Naive thymus-derived CD4-positive, alpha-beta T cell (primary cell): ENCODE measurements at regions of chr17 and their contacts with region 1.

Region 1: DNA sequence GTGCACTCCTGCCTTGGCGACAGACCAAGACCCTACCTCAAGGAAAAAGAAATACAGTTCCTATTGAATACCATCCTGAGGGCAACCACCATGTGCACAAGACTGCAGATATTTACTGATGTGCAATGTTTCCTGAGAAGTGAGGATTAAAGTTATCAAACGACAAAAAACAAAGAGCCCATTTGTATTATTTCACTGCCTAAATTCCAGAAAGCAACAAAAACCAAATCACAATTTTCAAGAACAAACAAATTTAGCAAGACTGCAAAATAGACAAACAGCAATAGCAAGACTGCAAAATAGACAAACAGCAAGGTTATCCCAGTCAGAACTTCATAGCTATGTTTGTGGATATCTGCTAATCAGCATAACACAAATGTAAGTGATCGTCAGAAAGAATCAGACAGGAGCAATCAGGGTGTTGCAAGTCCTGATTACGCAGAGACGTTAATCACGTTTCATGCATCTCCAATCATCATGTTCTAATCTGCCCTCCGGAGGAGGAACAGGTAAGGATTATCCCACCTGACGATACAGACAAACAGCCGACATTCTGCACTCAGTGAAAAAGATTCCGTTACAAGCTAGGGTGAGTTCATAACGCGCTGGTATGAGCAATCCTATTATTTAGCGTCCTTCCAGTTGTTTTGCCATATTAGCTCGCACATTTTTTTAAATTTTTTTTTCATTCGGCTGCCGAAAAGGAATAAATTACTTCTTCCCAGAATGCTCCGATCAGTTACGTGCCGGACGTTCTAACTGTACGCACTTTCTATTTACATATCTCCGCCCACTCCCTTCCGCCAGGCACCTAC is 2.9 kb downstream of the TMEM107 start:
- DNase-seq: peak; percentile 49 to 95 (median 91)
- ATAC-seq: peak; percentile 91
- H3K4me3 ChIP-seq: peak overlapping the region; percentile 57
- H3K4me3 Mint-ChIP-seq: peak overlapping the region; percentile 80 to 96 (median 90)
- H3K27ac ChIP-seq: peak overlapping the region; percentile 92
- H3K27ac Mint-ChIP-seq: peak overlapping the region; percentile 99 to 100 (median 100)
- H3K4me1 ChIP-seq: peaks cover 26 to 39% of the 10 kb centered on the region in 2 donors
- H3K4me1 Mint-ChIP-seq: peaks cover 33 to 60% (median 52%) of the 10 kb centered on the region in 7 donors
- H3K27me3 ChIP-seq: no peaks in the 10 kb centered on the region
- H3K27me3 Mint-ChIP-seq: no peaks in the 10 kb centered on the region

Region 2: DNA sequence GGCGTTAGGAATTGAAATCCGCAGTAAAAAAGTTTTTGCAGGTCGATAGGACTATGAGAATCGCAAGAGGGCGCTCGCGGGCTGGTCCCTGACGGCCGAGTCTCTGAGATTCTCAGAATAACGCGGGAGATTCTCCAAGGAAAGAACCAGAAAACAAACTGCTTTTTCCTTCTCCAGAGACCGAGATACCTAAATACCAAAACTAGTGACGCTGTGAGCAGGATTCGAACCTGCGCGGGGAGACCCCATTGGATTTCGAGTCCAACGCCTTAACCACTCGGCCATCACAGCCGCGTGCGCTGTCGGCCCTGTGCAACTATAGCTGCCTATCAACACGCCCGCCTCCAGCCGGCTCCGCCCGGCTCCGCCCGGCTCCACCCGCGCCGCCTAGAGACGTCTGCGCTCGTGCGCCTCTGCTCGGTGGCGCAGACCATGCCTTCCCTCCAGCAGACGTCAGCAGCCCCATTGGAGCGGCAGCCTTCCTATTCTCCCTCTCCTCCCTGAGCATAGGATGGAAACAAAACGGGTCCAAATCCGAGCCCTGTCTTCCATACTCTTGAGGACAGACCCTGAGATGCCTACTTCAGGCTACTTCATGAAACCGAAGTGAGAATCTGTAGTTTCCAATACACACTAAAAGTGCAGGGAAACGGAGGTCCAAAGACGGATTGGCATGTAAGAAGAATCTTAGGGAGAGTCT is 34.4 kb before region 1 on chr17:
- CTCF ChIA-PET with region 1: interaction called, 5 read pairs
- POLR2A ChIA-PET with region 1: interaction called, 14 read pairs
- intact Hi-C with region 1: loop called (anchors 1 kb)
- DNase-seq: peak; percentile 93 to 99 (median 98)
- ATAC-seq: peak; percentile 90
- H3K4me3 ChIP-seq: peak overlapping the region; percentile 76
- H3K4me3 Mint-ChIP-seq: no peak overlapping the region
- H3K27ac ChIP-seq: peak overlapping the region; percentile 84
- H3K27ac Mint-ChIP-seq: no peak overlapping the region
- H3K4me1 ChIP-seq: peaks cover 8 to 17% of the 10 kb centered on the region in 2 donors
- H3K4me1 Mint-ChIP-seq: peaks cover 0 to 5% (median 0%) of the 10 kb centered on the region in 7 donors
- H3K27me3 ChIP-seq: no peaks in the 10 kb centered on the region
- H3K27me3 Mint-ChIP-seq: peaks cover 0 to 11% (median 0%) of the 10 kb centered on the region in 5 donors

Region 3: GRCh38 chr17:8151123-8151640 is 22.1 kb before region 1 on chr17:
- CTCF ChIA-PET with region 1: interaction called, 7 read pairs
- POLR2A ChIA-PET with region 1: interaction called, 820 read pairs
- intact Hi-C with region 1: loop called (anchors 1 kb)
- DNase-seq: peak; percentile 89 to 96 (median 93)
- ATAC-seq: peak; percentile 67
- H3K4me3 ChIP-seq: peak overlapping the region; percentile 80
- H3K4me3 Mint-ChIP-seq: peak overlapping the region in 6 of 10 donors; percentile 64 to 95 (median 91)
- H3K27ac ChIP-seq: peak overlapping the region; percentile 95
- H3K27ac Mint-ChIP-seq: peak overlapping the region in 2 of 9 donors; percentile 96 to 99
- H3K4me1 ChIP-seq: peaks cover 50 to 53% of the 10 kb centered on the region in 2 donors
- H3K4me1 Mint-ChIP-seq: peaks cover 0 to 68% (median 45%) of the 10 kb centered on the region in 7 donors
- H3K27me3 ChIP-seq: no peaks in the 10 kb centered on the region
- H3K27me3 Mint-ChIP-seq: no peaks in the 10 kb centered on the region

Region 4: DNA sequence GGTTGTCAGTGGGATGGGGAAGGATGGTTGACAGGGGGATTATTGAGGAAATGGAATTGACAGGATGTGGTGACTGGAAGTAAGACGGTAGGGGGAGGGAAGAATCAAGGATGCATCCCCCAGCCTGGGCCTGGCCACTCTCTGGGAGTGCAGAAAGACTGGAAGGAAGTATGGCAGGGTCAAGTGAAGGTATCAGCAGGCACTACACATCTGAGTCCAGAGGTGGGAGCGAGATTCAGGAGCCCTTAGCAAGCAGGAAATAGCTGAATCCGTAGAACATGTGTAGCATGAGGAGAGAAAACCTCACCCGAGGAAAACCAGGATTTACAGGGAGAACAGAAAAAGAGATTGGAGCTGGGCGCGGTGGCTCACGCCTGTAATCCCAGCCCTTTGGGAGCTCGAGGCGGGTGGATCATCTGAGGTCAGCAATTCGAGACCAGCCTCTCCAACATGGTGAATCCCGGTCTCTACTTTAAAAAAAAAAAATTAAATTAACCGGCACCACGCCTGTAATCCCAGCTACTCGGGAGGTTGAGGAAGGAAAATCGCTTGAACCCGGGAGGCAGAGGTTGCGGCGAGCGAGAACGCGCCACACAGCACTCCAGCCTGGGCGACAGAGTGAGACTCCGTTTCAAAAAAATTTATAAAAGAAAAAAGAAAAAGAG is 10.9 kb after region 1 on chr17:
- CTCF ChIA-PET with region 1: interaction called, 4 read pairs
- POLR2A ChIA-PET with region 1: interaction called, 118 read pairs
- intact Hi-C with region 1: loop called (anchors 1 kb)
- DNase-seq: no peak
- ATAC-seq: no peak
- H3K4me3 ChIP-seq: no peak overlapping the region
- H3K4me3 Mint-ChIP-seq: peak overlapping the region in 9 of 10 donors; percentile 15 to 76 (median 66)
- H3K27ac ChIP-seq: no peak overlapping the region
- H3K27ac Mint-ChIP-seq: peak overlapping the region in 7 of 9 donors; percentile 15 to 84 (median 71)
- H3K4me1 ChIP-seq: peaks cover 13 to 14% of the 10 kb centered on the region in 2 donors
- H3K4me1 Mint-ChIP-seq: peaks cover 6 to 22% (median 18%) of the 10 kb centered on the region in 7 donors
- H3K27me3 ChIP-seq: no peaks in the 10 kb centered on the region
- H3K27me3 Mint-ChIP-seq: peaks cover 0 to 21% (median 0%) of the 10 kb centered on the region in 5 donors

Region 5: GRCh38 chr17:8209909-8210760 is 36.9 kb after region 1 on chr17 and contains the start of gene AURKB:
- CTCF ChIA-PET with region 1: no interaction called
- POLR2A ChIA-PET with region 1: interaction called, 20 read pairs
- intact Hi-C with region 1: loop called in 1 of 2 experiments (anchors 1 kb)
- DNase-seq: peak; percentile 76 to 96 (median 90)
- ATAC-seq: peak; percentile 99
- H3K4me3 ChIP-seq: peak within 1 kb of the TSS; percentile 91
- H3K4me3 Mint-ChIP-seq: peak within 1 kb of the TSS; percentile 85 to 97 (median 93)
- H3K27ac ChIP-seq: peak within 1 kb of the TSS; percentile 81
- H3K27ac Mint-ChIP-seq: peak within 1 kb of the TSS; percentile 60 to 95 (median 86)
- H3K4me1 ChIP-seq: peaks cover 5 to 8% of the 10 kb centered on the region in 2 donors
- H3K4me1 Mint-ChIP-seq: peaks cover 14 to 35% (median 16%) of the 10 kb centered on the region in 7 donors
- H3K27me3 ChIP-seq: no peaks in the 10 kb centered on the region
- H3K27me3 Mint-ChIP-seq: no peaks in the 10 kb centered on the region
- total RNA-seq, gene AURKB: 1.1 to 97.7 (median 1.3) TPM

Region 6: GRCh38 chr17:8294814-8295316 is 121.6 kb after region 1 on chr17:
- CTCF ChIA-PET with region 1: no interaction called
- POLR2A ChIA-PET with region 1: interaction called, 11 read pairs
- intact Hi-C with region 1: loop called in 1 of 2 experiments (anchors 1 kb)
- DNase-seq: no peak
- ATAC-seq: no peak
- H3K4me3 ChIP-seq: peak overlapping the region; percentile 96
- H3K4me3 Mint-ChIP-seq: peak overlapping the region; percentile 87 to 97 (median 90)
- H3K27ac ChIP-seq: peak overlapping the region; percentile 86
- H3K27ac Mint-ChIP-seq: peak overlapping the region; percentile 81 to 98 (median 93)
- H3K4me1 ChIP-seq: peaks cover 4 to 13% of the 10 kb centered on the region in 2 donors
- H3K4me1 Mint-ChIP-seq: peaks cover 23 to 45% (median 38%) of the 10 kb centered on the region in 7 donors
- H3K27me3 ChIP-seq: no peaks in the 10 kb centered on the region
- H3K27me3 Mint-ChIP-seq: no peaks in the 10 kb centered on the region

Region 7: DNA sequence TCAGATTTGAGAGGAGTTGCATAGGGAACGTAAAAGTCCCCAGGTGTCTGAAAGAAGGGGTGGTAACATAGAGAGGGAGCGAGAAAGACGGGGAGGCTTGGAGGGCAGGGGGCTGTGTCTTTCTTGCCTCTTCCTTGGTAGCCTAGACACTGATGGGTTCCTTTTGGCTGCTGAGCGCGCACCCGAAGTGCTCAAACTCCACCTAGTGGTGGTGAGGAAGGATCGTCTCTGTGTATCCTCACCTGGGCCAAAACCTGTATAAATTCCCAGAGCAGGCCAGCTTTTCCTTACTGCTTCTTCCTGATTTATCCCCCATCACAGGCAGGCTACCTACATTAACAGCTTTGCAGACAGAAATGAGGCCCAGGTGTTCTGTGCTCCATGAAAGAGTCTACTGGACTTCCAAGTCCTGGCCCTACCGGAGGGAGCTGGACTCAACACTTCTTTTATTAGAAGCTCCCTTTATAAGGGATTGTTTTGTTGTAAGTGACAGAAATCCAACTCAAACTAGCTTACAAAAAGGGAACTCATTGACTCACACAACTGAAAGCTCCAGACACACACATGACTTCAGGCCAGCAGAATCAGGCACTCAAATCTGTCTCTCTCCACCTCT is 127.5 kb after region 1 on chr17:
- CTCF ChIA-PET with region 1: no interaction called
- POLR2A ChIA-PET with region 1: interaction called, 11 read pairs
- intact Hi-C with region 1: loop called in 1 of 2 experiments (anchors 1 kb)
- DNase-seq: peak; percentile 33 to 80 (median 72)
- ATAC-seq: peak; percentile 95
- H3K4me3 ChIP-seq: no peak overlapping the region
- H3K4me3 Mint-ChIP-seq: peak overlapping the region in 1 of 10 donors; percentile 14
- H3K27ac ChIP-seq: no peak overlapping the region
- H3K27ac Mint-ChIP-seq: peak overlapping the region in 7 of 9 donors; percentile 6 to 80 (median 71)
- H3K4me1 ChIP-seq: peaks cover 3 to 9% of the 10 kb centered on the region in 2 donors
- H3K4me1 Mint-ChIP-seq: peaks cover 7 to 18% (median 14%) of the 10 kb centered on the region in 7 donors
- H3K27me3 ChIP-seq: no peaks in the 10 kb centered on the region
- H3K27me3 Mint-ChIP-seq: peaks cover 0 to 5% (median 0%) of the 10 kb centered on the region in 5 donors